Motor neuron (in vitro differentiated cells): ENCODE measurements at regions of chr1 and their contacts with region 1.

Region 1: DNA sequence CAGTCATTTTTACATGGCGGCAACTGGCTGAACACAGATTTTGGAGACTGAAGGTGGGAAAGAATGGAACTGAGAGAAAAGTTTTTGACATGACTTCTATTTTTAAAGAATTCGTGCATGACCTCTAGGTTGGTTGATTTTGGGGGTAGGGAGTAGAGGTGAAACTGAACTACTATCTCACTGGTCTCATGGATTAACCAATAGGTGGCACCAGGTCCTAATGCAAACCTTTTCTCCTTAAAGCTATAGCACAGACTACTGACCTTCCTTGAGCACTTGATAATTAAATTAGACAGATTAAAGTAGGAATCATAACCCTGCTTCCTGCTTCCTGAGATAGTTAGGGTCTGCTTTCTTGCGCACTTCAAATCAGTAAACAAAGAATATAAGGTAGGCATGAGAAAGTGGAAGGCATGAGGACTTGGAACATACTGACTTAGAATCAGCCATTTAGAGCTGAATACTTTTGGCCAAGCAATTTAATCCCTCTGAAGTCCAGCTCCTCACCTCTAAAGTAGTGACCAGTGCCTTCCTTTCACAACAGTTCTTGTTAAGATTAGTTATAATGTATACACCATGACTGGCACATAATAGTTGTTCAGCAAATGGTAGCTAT is 206.0 kb downstream of the CENPF start:
- ATAC-seq: peak in 3 of 8 experiments; percentile 55 to 74 (median 57)
- H3K4me3 ChIP-seq: no peak overlapping the region
- H3K27ac ChIP-seq: no peak overlapping the region
- H3K4me1 ChIP-seq: no peaks in the 10 kb centered on the region

Region 2: GRCh38 chr1:214281720-214282629 is 527.0 kb before region 1 on chr1:
- in situ Hi-C with region 1: no loop called
- ATAC-seq: peak in 5 of 8 experiments; percentile 0 to 31 (median 19)
- H3K4me3 ChIP-seq: peak overlapping the region; percentile 86 to 100 (median 93)
- H3K27ac ChIP-seq: peak overlapping the region; percentile 98
- H3K4me1 ChIP-seq: peaks cover 26 to 27% of the 10 kb centered on the region in 2 donors

Region 3: GRCh38 chr1:215001419-215002021 is 192.6 kb after region 1 on chr1:
- in situ Hi-C with region 1: no loop called
- ATAC-seq: no peak
- H3K4me3 ChIP-seq: no peak overlapping the region
- H3K27ac ChIP-seq: no peak overlapping the region
- H3K4me1 ChIP-seq: no peaks in the 10 kb centered on the region

Region 4: DNA sequence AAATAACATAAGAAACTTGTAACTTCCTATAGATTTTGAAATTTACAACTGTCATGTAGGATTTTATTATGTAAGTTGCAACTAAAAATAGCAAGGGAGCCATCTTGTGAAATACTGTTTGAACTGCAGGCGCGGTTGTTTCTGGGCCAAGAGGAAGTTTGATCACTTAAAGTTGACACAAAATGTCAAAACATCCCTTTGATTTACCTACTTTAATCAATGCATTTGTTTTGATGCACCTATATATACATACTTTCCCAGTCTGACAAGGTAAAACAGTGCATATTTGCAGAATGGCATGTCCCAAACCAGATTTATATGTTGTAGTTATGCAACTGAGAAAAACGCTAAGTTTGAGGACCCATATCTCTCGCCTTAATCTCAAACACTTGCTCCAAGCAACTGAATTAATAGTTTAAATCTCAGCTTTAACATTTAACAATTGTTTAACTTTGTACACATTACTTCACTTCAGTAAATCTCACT is 337.4 kb after region 1 on chr1:
- in situ Hi-C with region 1: loop called in 2 of 9 experiments (anchors 25 kb)
- ATAC-seq: no peak
- H3K4me3 ChIP-seq: no peak overlapping the region
- H3K27ac ChIP-seq: no peak overlapping the region
- H3K4me1 ChIP-seq: no peaks in the 10 kb centered on the region

Region 5: DNA sequence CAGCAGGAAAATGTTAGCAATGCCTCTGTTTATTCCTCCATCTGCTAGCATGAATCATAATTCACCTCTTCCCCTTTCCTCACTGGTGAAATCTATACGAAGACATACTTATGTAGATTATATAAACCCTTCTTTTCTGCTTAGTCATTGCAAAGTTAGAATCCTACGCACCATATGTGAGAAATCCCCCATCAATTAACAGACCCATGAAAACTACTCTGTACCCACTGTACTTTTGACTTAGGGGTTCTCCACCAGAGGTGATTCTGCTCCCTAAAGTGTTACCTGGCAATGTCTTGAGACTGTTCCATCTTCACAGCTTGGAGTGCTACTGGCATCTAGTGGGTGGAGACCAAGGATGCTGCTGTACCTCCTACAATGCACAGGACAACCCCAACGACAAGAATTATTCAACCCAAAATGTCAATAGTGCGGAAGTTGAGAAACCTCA is 708.5 kb after region 1 on chr1:
- in situ Hi-C with region 1: loop called in 1 of 9 experiments (anchors 25 kb)
- ATAC-seq: peak in 7 of 8 experiments; percentile 52 to 96 (median 77)
- H3K4me3 ChIP-seq: no peak overlapping the region
- H3K27ac ChIP-seq: no peak overlapping the region
- H3K4me1 ChIP-seq: peaks cover 0 to 3% of the 10 kb centered on the region in 2 donors